ENCODE measurements at regions of chr11 and their contacts with region 1.

Region 1: GRCh38 chr11:9460322-9461067 is at the start of gene ZNF143:
- DNase-seq: peak; percentile 99 to 100 (median 100)
- H3K4me3 ChIP-seq: peak within 1 kb of the TSS; percentile 73 to 100 (median 94)
- H3K27ac ChIP-seq: peak within 1 kb of the TSS; percentile 96 to 100 (median 100)
- H3K27me3 ChIP-seq: no peaks in the 10 kb centered on the region
- CTCF ChIP-seq: peak in 11 of 56 donors; percentile 3 to 34 (median 18)
- total RNA-seq, gene ZNF143: 12.5 to 37.0 (median 22.4) TPM

Region 2: GRCh38 chr11:8682303-8683114 is 778.0 kb before region 1 on chr11 and contains the starts of genes RPL27A and TRIM66:
- intact Hi-C with region 1: loop called in 1 of 2 experiments (anchors 5 kb)
- DNase-seq: peak; percentile 96 to 99 (median 98)
- H3K4me3 ChIP-seq: peak within 1 kb of the TSS; percentile 69 to 100 (median 95)
- H3K27ac ChIP-seq: peak within 1 kb of the TSS; percentile 63 to 98 (median 94)
- H3K27me3 ChIP-seq: no peaks in the 10 kb centered on the region
- CTCF ChIP-seq: peak in 41 of 56 donors; percentile 9 to 59 (median 35)
- total RNA-seq, gene RPL27A: 155 to 321 (median 208) TPM
- total RNA-seq, gene TRIM66: 9.2 to 31.7 (median 18.5) TPM

Region 3: DNA sequence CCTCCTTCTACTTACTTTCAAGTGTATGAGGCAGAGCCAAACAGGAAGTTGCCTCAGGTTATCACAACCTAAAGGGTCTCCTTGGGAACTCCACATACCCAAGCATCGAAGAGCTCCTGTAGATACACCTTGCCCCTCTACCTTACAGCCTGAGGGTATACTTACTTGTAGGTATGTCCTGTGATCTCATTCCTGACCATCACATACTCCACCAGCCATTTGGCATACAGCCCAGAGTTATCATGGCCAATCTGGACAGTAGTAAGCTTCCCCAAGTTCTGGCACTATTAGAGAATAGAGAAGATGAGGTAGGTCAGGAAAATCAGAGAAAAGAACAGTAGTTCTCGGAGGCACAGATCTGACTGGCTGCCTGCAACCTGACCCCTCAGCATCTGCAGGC is 315.7 kb before region 1 on chr11:
- intact Hi-C with region 1: loop called in 1 of 2 experiments (anchors 10 kb)
- DNase-seq: peak in 1 of 10 donors; percentile 71
- H3K4me3 ChIP-seq: no peak overlapping the region
- H3K27ac ChIP-seq: peak overlapping the region in 45 of 59 donors; percentile 0 to 93 (median 77)
- H3K27me3 ChIP-seq: no peaks in the 10 kb centered on the region
- CTCF ChIP-seq: no peak

Region 4: GRCh38 chr11:9314291-9315036 is 146.0 kb before region 1 on chr11 and contains the start of gene TMEM41B:
- intact Hi-C with region 1: loop called (anchors 1 to 2 kb)
- DNase-seq: peak; percentile 91 to 99 (median 96)
- H3K4me3 ChIP-seq: peak within 1 kb of the TSS; percentile 67 to 100 (median 95)
- H3K27ac ChIP-seq: peak within 1 kb of the TSS; percentile 44 to 97 (median 90)
- H3K27me3 ChIP-seq: peaks cover 0 to 11% (median 0%) of the 10 kb centered on the region in 45 donors
- CTCF ChIP-seq: peak in 51 of 56 donors; percentile 1 to 67 (median 41)
- total RNA-seq, gene TMEM41B: 31.7 to 63.9 (median 42.1) TPM

Region 5: GRCh38 chr11:9363954-9364912 is 96.3 kb before region 1 on chr11:
- intact Hi-C with region 1: loop called (anchors 1 to 5 kb)
- DNase-seq: peak; percentile 77 to 97 (median 91)
- H3K4me3 ChIP-seq: peak overlapping the region; percentile 49 to 84 (median 70)
- H3K27ac ChIP-seq: peak overlapping the region; percentile 87 to 100 (median 98)
- H3K27me3 ChIP-seq: no peaks in the 10 kb centered on the region
- CTCF ChIP-seq: peak in 24 of 56 donors; percentile 5 to 51 (median 26)

Region 6: DNA sequence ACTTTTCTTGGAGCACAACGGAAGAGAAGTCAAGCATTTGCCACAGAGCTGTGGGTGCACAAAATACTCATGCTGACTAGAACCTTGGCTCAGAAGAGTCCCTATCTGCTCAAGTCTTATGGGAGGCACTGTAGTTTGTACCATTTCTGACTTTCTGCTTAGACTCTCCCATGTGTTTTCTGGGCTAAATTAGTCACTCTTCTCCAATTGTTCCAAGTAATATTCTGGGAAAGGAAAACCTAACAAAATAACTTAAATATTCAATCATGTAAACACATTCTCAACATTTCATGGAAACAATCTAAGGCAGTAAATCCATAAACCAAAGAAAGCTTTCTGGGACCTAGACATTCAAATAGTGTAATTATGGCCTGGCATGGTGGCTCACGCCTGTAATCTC is 424.1 kb after region 1 on chr11:
- intact Hi-C with region 1: no loop called
- DNase-seq: no peak
- H3K4me3 ChIP-seq: no peak overlapping the region
- H3K27ac ChIP-seq: no peak overlapping the region
- H3K27me3 ChIP-seq: no peaks in the 10 kb centered on the region
- CTCF ChIP-seq: no peak

Measured in dorsolateral prefrontal cortex (tissue), 120 donors.